ENCODE measurements at regions of chr2 and their contacts with region 1.

Region 1: GRCh38 chr2:231124838-231125568 is at the start of gene HTR2B:
- DNase-seq: no peak
- ATAC-seq: no peak
- H3K4me3 ChIP-seq: no peak within 1 kb of the TSS
- H3K27ac ChIP-seq: no peak within 1 kb of the TSS
- H3K4me1 ChIP-seq: peaks cover 32% of the 10 kb centered on the region
- H3K27me3 ChIP-seq: no peaks in the 10 kb centered on the region
- CTCF ChIP-seq: no peak
- total RNA-seq, gene HTR2B: not detected in 2 replicates

Region 2: GRCh38 chr2:230589497-230590015 is 535.4 kb before region 1 on chr2:
- CTCF ChIA-PET with region 1: no interaction called
- POLR2A ChIA-PET with region 1: no interaction called
- intact Hi-C with region 1: no loop called
- DNase-seq: no peak
- ATAC-seq: no peak
- H3K4me3 ChIP-seq: no peak overlapping the region
- H3K27ac ChIP-seq: no peak overlapping the region
- H3K4me1 ChIP-seq: no peaks in the 10 kb centered on the region
- H3K27me3 ChIP-seq: no peaks in the 10 kb centered on the region
- CTCF ChIP-seq: no peak

Region 3: DNA sequence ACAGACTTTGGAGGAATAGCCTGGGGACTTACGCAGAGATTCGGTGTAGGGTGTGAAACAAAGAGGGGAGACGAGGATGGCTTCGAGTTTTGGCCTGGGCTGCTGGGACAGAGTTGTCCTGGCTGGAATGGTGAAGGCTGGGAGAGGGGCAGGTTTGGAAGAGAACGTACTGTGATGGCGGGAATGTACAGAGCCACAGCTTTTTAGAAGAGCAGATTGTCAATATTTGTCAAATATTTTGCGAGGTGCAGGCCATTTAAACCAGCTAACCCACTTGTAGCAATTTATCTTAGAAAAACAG is 274.7 kb before region 1 on chr2:
- CTCF ChIA-PET with region 1: no interaction called
- POLR2A ChIA-PET with region 1: interaction called, 18 read pairs
- intact Hi-C with region 1: no loop called
- DNase-seq: no peak
- ATAC-seq: no peak
- H3K4me3 ChIP-seq: no peak overlapping the region
- H3K27ac ChIP-seq: no peak overlapping the region
- H3K4me1 ChIP-seq: no peaks in the 10 kb centered on the region
- H3K27me3 ChIP-seq: peaks cover 5% of the 10 kb centered on the region; the same call in 1 of the 2 replicates
- CTCF ChIP-seq: peak; percentile 13; the same call in 1 of the 2 replicates

Region 4: DNA sequence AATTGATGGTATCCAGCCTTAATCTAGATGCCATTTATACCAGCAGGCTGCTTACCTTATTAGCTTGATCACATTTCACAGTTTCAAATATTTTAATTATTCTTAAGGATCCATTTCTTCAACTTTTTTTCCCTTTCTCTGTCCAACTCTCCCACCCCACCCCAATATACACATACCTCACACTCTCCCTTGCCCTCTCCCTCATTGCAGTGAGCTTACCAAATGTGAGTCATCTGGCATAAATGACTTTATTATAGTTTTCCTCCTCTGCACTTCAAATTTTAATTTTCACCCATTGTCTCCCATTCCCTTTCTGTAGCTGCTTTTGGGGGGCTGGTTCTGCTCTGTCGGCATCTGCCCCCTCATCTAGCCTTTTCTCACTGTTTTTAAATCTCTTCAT is 13.0 kb before region 1 on chr2:
- CTCF ChIA-PET with region 1: interaction called, 8 read pairs
- POLR2A ChIA-PET with region 1: no interaction called
- intact Hi-C with region 1: loop called (anchors 2 kb)
- DNase-seq: peak; percentile 41
- ATAC-seq: peak; percentile 88
- H3K4me3 ChIP-seq: no peak overlapping the region
- H3K27ac ChIP-seq: peak overlapping the region; percentile 12; the same call in 1 of the 2 replicates
- H3K4me1 ChIP-seq: peaks cover 19% of the 10 kb centered on the region
- H3K27me3 ChIP-seq: no peaks in the 10 kb centered on the region
- CTCF ChIP-seq: no peak

Measured in PC-3 (cell line).